Mammary epithelial cell (primary cell): ENCODE measurements at regions of chr9 and their contacts with region 1.

Region 1: DNA sequence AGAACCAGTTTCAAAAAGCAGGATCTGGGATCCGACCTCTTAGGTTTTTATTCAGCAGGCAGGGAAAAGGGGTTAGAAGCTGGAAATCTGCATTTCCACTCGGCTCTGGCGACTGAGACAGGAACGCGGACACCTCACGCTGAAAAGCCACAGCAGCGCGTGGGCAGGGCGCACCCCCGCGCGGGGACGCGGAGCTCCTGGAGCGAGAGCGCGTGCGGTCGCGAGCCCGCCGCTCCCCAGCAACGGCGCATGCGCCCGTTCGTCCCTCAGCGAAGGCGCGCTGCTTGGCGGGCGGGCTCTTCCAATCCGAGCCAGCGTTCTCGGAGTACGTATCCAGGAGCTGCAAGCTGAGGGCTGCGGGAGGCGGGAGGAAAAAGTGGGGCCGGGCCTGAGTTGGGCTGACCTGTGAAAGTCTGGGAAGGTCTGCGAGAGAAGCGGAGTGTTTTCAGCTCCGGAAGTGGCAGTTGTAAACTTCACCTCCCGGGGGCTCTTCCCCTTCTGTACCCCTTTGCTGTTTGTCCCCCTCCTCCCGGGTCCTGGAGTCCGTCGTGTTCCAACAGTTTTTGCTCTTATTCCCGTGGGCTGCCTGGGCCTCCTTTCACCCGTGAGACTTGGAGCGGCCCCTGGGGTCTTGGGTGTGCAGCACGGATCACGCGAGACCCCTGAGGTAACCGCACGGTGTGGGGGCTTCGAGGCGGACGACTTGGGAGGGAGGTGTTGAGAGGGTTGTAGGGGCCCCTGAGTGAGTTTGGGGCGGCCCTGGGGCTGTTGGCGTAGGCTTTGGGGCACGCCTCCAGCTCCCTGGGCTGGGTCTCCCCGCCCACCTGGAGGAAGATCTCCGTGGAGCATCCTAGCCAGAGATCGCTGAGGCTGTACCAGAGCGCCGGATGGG is at the start of gene CCDC171:
- DNase-seq: peak; percentile 94
- H3K4me3 ChIP-seq: peak within 1 kb of the TSS; percentile 63 to 91 (median 83)
- H3K27ac ChIP-seq: peak within 1 kb of the TSS; percentile 60
- H3K4me1 ChIP-seq: peaks cover 15% of the 10 kb centered on the region
- H3K27me3 ChIP-seq: no peaks in the 10 kb centered on the region
- CTCF ChIP-seq: no peak
- total RNA-seq, gene CCDC171: 2.2 to 2.8 TPM

Region 2: GRCh38 chr9:15306757-15307534 is 245.9 kb before region 1 on chr9 and contains the start of gene TTC39B:
- CTCF ChIA-PET with region 1: no interaction called
- dilution Hi-C with region 1: no loop called
- in situ Hi-C with region 1: no loop called
- intact Hi-C with region 1: loop called (anchors 5 kb)
- DNase-seq: peak; percentile 94
- H3K4me3 ChIP-seq: peak within 1 kb of the TSS; percentile 44 to 85 (median 83)
- H3K27ac ChIP-seq: peak within 1 kb of the TSS; percentile 60
- H3K4me1 ChIP-seq: peaks cover 27% of the 10 kb centered on the region
- H3K27me3 ChIP-seq: no peaks in the 10 kb centered on the region
- CTCF ChIP-seq: no peak
- total RNA-seq, gene TTC39B: 25.5 to 26.0 TPM

Region 3: DNA sequence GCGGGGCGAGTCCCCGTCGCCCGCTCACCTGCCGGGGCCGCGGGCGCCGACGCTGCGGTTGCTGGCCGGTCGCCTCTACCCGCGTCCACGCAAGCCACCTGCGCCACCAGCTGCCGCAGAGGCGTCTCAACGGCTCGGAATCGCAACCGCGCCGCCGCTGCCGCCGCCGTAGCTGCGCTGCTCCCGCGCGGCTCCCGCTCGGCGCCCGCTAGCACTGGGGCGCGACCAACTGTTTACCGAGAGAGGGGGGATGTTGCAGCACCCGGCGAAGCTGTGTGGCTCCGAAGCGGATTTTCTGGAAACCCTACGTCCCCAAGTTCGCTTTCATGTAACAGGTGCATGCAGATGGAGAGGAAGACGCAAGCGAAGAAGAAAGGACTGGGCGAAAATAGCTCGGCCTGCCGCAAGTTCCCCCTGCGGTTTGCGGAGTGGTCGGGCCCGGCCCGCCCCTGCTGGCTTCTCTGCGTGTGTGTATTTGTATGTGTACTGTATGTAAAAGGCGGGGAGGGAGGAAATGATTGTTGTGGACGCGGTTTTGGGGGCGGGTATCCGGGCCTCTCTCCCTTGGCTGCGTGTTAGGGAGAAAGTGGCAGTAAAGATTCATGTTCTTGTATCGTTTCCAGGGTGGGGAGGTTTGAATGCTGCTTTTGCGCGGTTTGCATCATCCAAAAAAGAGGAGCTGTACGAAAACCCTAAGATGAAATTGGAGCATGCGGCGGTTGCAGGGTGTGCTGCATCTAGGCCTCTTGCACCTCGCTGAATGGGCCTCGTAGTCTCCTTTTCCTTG is 41.9 kb before region 1 on chr9 and contains the start of gene PSIP1:
- CTCF ChIA-PET with region 1: no interaction called
- dilution Hi-C with region 1: no loop called
- in situ Hi-C with region 1: no loop called
- intact Hi-C with region 1: loop called (anchors 2 kb)
- DNase-seq: peak; percentile 72
- H3K4me3 ChIP-seq: peak within 1 kb of the TSS; percentile 70 to 98 (median 88)
- H3K27ac ChIP-seq: peak within 1 kb of the TSS; percentile 88
- H3K4me1 ChIP-seq: peaks cover 3% of the 10 kb centered on the region
- H3K27me3 ChIP-seq: no peaks in the 10 kb centered on the region
- CTCF ChIP-seq: no peak
- total RNA-seq, gene PSIP1: 12.7 to 38.4 TPM

Region 4: GRCh38 chr9:15670884-15671283 is 118.0 kb after region 1 on chr9:
- CTCF ChIA-PET with region 1: no interaction called
- dilution Hi-C with region 1: no loop called
- in situ Hi-C with region 1: no loop called
- intact Hi-C with region 1: no loop called
- DNase-seq: no peak
- H3K4me3 ChIP-seq: no peak overlapping the region
- H3K27ac ChIP-seq: no peak overlapping the region
- H3K4me1 ChIP-seq: no peaks in the 10 kb centered on the region
- H3K27me3 ChIP-seq: no peaks in the 10 kb centered on the region
- CTCF ChIP-seq: no peak